Activated T-helper 1 cell treated with anti-CD3 and anti-CD28 coated beads, Interleukin-12 subunit alpha, Interleukin-12 subunit beta, Interleukin-2, Interleukin-4 antibody, amounts not matched to agents 30 ng/mL and 10 ng/mL and 1 ng/mL, durations not matched to agents 14 hours and 24 hours and 36 hours (primary cell): ENCODE measurements at regions of chr17 and their contacts with region 1.

Region 1: DNA sequence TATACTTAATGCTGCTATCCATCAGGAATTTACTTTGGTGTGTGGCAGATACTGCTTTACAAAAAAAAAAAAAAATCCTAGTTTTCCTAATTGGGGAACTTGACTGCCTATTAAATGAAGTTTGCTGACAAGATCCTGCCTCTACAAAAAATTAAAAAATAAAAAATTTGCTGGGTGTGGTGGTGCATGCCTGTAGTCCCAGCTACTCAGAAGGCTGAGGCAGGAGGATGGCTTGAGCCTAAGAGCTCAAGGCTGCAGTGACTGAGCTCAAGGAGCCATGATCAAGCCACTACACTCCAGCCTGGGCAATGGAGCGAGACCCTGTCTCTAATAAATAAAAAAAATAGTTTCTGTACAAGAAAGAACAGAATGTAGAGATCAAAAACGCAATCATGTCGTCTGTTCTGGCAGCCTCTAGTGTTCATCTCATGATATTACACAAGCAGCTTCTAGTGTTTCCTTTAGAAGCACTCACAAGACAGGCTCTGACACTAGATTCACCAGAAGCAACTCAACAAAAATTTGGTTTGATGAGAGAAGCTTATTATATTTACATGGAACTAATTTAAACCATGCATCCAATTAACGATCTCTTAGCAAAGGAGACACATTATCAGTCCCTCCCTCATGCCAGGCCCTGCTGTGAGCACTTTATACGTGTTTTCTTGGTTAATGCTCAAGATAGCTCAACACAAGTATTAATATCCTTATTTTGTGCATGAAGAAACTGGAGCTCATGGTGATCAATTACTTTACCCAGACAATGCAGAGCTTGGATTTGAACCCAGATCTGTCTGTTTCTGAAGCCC is 6.8 kb upstream of the KRTAP17-1 start:
- DNase-seq: no peak
- H3K4me3 Mint-ChIP-seq: no peak overlapping the region
- H3K27ac Mint-ChIP-seq: no peak overlapping the region
- H3K4me1 Mint-ChIP-seq: peaks cover 7% of the 10 kb centered on the region
- H3K27me3 Mint-ChIP-seq: no peaks in the 10 kb centered on the region

Region 2: DNA sequence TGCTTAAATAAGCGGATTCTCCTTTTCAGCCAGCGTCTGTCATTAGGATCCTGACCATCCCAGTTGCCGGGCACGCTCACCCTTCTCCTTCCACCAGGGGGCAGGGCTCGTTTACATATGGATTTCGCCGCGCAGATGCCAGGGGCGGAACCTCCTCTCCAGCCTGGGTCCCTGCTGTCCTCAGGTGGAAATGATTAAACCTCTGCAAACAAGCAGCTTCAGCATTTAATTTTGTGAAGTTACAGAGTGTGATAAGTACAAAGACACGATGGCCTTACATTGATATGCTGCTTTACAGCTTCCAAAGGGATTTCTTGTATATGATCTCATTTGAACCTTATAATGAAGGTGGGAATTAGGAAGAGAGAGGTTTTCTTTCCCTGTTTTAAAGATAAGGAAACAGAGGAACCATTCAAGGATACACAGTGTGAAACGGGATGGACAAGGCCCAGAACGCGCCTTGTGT is 518.6 kb before region 1 on chr17:
- intact Hi-C with region 1: loop called (anchors 2 kb)
- DNase-seq: peak; percentile 49
- H3K4me3 Mint-ChIP-seq: no peak overlapping the region
- H3K27ac Mint-ChIP-seq: no peak overlapping the region
- H3K4me1 Mint-ChIP-seq: no peaks in the 10 kb centered on the region
- H3K27me3 Mint-ChIP-seq: peaks cover 39% of the 10 kb centered on the region

Region 3: DNA sequence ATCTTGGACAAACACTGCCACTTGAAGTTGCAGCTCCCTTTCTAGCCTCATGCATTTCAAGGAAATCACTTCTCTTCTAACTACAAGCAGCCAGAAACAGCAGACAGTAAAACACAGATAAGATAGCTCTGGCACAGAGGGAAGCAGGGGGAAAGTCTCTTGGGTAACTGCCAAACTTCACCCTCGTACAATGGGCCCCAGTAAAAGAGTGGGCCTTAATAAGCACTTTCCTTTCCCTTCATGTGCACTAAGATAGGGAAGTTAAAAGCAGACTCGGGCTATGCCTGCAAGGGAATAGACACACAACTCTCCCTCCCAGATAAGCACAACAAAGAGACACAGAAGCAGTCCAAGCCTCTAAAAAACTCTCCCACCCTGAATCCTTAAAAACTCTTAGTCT is 168.4 kb before region 1 on chr17:
- intact Hi-C with region 1: no loop called
- DNase-seq: no peak
- H3K4me3 Mint-ChIP-seq: no peak overlapping the region
- H3K27ac Mint-ChIP-seq: no peak overlapping the region
- H3K4me1 Mint-ChIP-seq: no peaks in the 10 kb centered on the region
- H3K27me3 Mint-ChIP-seq: peaks cover 6% of the 10 kb centered on the region

Region 4: GRCh38 chr17:41615454-41615853 is 293.2 kb after region 1 on chr17:
- intact Hi-C with region 1: no loop called
- DNase-seq: no peak
- H3K4me3 Mint-ChIP-seq: no peak overlapping the region
- H3K27ac Mint-ChIP-seq: no peak overlapping the region
- H3K4me1 Mint-ChIP-seq: no peaks in the 10 kb centered on the region
- H3K27me3 Mint-ChIP-seq: no peaks in the 10 kb centered on the region